Endothelial cell of umbilical vein (primary cell): ENCODE measurements at regions of chr5 and their contacts with region 1.

Region 1: DNA sequence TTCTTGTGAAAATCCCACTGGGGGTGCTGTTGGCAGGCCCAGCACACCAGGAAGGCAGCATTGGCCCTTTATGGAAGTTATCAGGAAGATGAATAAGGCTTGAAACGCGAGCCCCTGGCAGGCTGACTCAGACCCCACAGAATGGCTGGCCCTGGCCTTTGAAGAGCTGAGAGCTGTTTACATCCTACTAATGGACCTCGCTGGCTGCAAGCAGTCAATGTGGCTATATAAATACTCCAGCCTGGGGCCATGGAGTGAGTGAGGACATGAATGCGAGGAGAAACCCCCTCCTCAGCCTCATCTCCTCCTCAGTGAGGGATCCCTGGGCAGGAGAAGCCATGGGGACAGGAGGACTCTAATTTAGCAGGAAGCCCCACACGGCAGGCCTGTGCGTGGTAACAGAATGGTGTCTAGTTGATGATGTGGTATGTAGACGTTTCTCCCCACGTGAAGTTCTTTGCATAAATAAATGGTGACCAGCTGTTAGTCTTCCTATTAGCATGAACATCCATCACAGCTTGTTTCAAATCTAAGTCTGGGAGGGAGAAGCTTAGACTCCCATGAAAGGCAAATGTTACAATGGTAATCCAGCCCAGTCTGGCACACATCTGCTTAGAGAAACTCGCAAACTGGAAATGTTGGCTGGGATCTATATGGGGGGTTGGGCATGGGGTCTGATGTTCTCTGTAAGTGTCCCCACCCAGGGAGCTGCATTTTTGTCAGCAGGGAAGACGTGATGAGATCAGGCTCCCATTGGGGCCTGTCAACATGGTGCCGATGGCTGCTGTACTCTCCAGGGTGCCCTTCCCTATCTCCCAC is 175.1 kb upstream of the PITX1 start:
- DNase-seq: peak; percentile 97
- H3K4me3 ChIP-seq: no peak overlapping the region
- H3K27ac ChIP-seq: peak overlapping the region; percentile 59
- H3K4me1 ChIP-seq: peaks cover 22% of the 10 kb centered on the region
- H3K27me3 ChIP-seq: no peaks in the 10 kb centered on the region
- CTCF ChIP-seq: peak; percentile 43 to 46
- POLR2A ChIP-seq: no peak

Region 2: GRCh38 chr5:134975078-134975715 is 233.9 kb before region 1 on chr5:
- CTCF ChIA-PET with region 1: no interaction called
- POLR2A ChIA-PET with region 1: no interaction called
- dilution Hi-C with region 1: no loop called
- intact Hi-C with region 1: no loop called
- DNase-seq: no peak
- H3K4me3 ChIP-seq: no peak overlapping the region
- H3K27ac ChIP-seq: no peak overlapping the region
- H3K4me1 ChIP-seq: no peaks in the 10 kb centered on the region
- H3K27me3 ChIP-seq: no peaks in the 10 kb centered on the region
- CTCF ChIP-seq: no peak
- POLR2A ChIP-seq: no peak

Region 3: GRCh38 chr5:135135530-135136226 is 73.4 kb before region 1 on chr5:
- CTCF ChIA-PET with region 1: no interaction called
- POLR2A ChIA-PET with region 1: no interaction called
- dilution Hi-C with region 1: no loop called
- intact Hi-C with region 1: no loop called
- DNase-seq: no peak
- H3K4me3 ChIP-seq: no peak overlapping the region
- H3K27ac ChIP-seq: no peak overlapping the region
- H3K4me1 ChIP-seq: no peaks in the 10 kb centered on the region
- H3K27me3 ChIP-seq: peaks cover 0 to 6% of the 10 kb centered on the region in 2 experiments
- CTCF ChIP-seq: no peak
- POLR2A ChIP-seq: no peak

Region 4: DNA sequence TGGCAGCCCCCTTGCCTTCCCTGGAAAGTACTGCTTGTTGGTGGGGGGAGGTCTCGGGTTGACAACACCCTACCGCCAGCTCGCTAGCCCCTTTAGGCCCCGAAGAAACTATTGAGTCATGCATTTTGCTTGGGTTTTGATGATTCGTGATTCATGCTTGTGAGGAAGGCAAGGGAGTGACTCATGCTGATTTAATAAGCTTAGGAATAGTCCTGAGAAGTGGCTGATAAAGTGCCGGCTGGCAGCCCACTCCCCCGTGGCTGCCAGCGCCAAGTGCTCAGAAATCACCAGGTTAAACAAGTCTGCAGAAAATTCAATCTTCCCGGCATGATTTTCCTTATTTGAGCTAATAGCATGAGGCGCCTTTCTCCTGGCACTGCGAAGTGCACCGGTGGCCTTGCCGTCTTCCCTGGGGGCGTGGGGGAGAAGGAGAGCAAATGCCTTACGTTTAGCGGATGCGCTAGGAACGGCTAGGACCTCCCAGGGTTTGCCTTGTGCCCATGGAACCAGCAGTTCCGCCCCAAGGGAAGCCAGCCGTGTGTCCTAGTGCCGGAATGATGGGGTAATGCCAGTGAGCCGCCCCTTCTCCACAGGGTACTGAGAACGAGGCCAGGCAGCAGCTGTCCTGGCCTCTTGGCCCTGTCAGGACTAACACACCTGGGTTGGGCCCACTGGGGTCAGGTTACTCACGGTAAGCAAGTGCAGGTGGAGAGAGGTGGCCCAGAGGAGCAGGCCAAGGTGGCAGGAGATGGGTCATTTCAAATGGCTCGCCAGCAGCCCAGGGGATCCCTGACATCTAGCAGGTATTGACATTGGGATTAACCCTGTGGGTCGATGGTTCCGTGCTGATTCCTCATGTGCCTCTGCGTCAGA is 38.0 kb after region 1 on chr5:
- CTCF ChIA-PET with region 1: interaction called, 19 read pairs
- POLR2A ChIA-PET with region 1: no interaction called
- dilution Hi-C with region 1: no loop called
- intact Hi-C with region 1: loop called (anchors 1 kb)
- DNase-seq: peak; percentile 90
- H3K4me3 ChIP-seq: no peak overlapping the region
- H3K27ac ChIP-seq: peak overlapping the region; percentile 21
- H3K4me1 ChIP-seq: peaks cover 22% of the 10 kb centered on the region
- H3K27me3 ChIP-seq: no peaks in the 10 kb centered on the region
- CTCF ChIP-seq: no peak
- POLR2A ChIP-seq: no peak

Region 5: DNA sequence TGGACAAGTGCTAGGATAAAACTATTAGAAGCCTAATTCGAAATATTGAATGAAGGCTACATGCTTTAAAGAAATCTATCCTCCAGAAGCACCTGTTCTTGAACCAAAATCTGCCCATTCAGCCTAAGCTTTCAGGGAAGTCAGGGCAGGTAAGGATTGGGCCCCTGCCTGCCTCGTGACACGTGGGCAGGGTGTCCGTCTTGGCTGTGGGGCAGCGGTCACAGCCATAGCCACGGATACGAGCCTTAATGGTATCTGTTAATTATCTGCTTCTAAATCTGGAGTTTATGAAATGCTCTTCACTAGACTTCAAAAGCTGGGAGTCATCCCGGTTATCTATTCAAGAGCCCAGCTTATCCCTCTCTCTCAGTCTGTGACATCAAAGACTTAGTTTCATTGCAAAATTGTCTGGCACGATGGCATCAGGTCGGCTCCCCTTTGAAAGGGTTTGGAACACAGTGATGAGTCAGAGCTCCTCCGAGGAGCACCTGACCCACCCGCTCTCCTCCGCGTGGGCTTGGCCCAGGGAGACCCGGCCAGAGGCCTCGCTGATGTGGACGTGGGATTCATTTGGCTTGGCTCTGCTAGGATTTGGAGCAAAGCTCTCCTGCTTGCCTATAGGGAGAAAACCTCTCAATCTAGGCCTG is 54.0 kb after region 1 on chr5:
- CTCF ChIA-PET with region 1: interaction called, 7 read pairs
- POLR2A ChIA-PET with region 1: no interaction called
- dilution Hi-C with region 1: no loop called
- intact Hi-C with region 1: loop called (anchors 5 kb)
- DNase-seq: no peak
- H3K4me3 ChIP-seq: no peak overlapping the region
- H3K27ac ChIP-seq: no peak overlapping the region
- H3K4me1 ChIP-seq: peaks cover 9% of the 10 kb centered on the region
- H3K27me3 ChIP-seq: no peaks in the 10 kb centered on the region
- CTCF ChIP-seq: no peak
- POLR2A ChIP-seq: no peak